Activated T-helper 2 cell treated with anti-CD3 and anti-CD28 coated beads, Interferon-gamma antibody, Interleukin-2, Interleukin-4, amounts not matched to agents 10 μg/mL and 5 μg/mL and 100 μg/mL, durations not matched to agents 14 hours and 24 hours and 36 hours (primary cell): ENCODE measurements at regions of chr6 and their contacts with region 1.

Region 1: GRCh38 chr6:90445533-90446108 is 141.3 kb downstream of the MAP3K7 start:
- DNase-seq: no peak
- H3K4me3 Mint-ChIP-seq: no peak overlapping the region
- H3K27ac Mint-ChIP-seq: peak overlapping the region; percentile 97
- H3K4me1 Mint-ChIP-seq: peaks cover 56% of the 10 kb centered on the region
- H3K27me3 Mint-ChIP-seq: no peaks in the 10 kb centered on the region

Region 2: GRCh38 chr6:90401933-90402830 is 43.4 kb before region 1 on chr6:
- intact Hi-C with region 1: loop called (anchors 1 kb)
- DNase-seq: peak; percentile 41
- H3K4me3 Mint-ChIP-seq: peak overlapping the region; percentile 15
- H3K27ac Mint-ChIP-seq: peak overlapping the region; percentile 88
- H3K4me1 Mint-ChIP-seq: peaks cover 85% of the 10 kb centered on the region
- H3K27me3 Mint-ChIP-seq: no peaks in the 10 kb centered on the region

Region 3: GRCh38 chr6:90411292-90411781 is 34.3 kb before region 1 on chr6:
- intact Hi-C with region 1: loop called (anchors 1 kb)
- DNase-seq: peak; percentile 62
- H3K4me3 Mint-ChIP-seq: no peak overlapping the region
- H3K27ac Mint-ChIP-seq: peak overlapping the region; percentile 81
- H3K4me1 Mint-ChIP-seq: peaks cover 81% of the 10 kb centered on the region
- H3K27me3 Mint-ChIP-seq: no peaks in the 10 kb centered on the region

Region 4: DNA sequence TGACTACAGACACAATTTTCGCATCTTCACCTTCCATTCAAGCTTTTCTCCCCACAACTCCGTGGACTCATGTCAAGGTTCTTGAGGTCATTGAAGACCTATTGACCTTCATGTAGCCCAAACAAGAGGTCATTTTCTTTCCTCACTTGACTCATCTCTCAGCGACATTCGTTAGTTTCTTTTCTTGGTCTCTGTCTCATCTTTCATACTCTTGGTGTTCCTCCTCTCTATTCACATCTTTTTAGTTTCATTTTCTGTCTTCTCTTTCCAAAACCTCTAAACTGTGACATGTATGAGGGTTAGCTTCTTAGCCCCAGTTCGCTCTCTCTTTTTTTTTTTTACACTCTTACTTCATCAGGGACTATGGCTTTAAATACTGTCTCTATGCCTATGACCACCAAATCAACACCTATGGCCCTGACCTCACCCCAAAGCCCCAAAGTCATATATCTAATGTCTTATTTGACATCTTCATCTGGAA is 20.4 kb before region 1 on chr6:
- intact Hi-C with region 1: loop called (anchors 1 kb)
- DNase-seq: no peak
- H3K4me3 Mint-ChIP-seq: peak overlapping the region; percentile 52
- H3K27ac Mint-ChIP-seq: peak overlapping the region; percentile 95
- H3K4me1 Mint-ChIP-seq: peaks cover 28% of the 10 kb centered on the region
- H3K27me3 Mint-ChIP-seq: no peaks in the 10 kb centered on the region

Region 5: DNA sequence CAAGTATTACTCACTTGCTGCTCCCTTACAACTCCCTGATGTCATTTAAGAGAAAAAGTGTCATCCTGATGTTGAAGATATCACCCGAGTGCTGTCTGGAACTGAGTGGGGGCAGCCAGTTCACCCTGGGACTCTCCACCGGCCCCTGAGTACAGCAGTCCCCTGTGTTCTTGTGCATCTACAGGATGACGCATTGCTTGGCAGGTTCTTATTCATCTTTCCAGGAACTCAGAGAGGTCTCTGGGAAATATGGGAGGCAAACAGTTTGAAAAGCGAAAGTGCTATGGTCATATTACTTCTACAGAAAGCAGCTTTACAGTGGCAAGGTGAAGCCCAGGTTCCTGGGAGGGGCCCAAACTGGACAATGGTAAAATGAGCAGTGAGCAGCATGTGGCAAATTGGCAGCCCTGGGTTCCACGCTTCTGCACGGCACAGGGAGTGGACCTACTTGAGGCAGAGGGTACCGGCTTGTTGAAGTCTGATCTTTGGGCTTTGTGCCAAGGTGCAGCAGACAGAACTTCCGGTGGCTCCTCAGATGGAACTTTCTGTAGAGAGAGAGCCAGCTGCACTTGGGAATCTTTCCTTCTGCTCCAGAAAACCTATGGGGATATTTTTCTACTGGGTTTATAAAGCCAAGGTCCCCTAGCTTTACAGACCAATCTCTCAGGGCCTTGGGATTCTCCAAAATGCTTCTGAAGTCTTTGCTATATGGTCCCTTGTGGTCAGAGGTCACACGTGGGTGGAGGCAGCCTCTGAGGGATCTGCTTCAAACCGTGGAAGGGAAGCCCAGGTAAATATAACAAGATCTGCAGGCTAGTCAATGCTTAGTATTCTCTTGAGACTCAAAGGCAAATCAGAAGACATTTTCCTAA is 13.0 kb after region 1 on chr6:
- intact Hi-C with region 1: loop called (anchors 1 kb)
- DNase-seq: peak; percentile 68
- H3K4me3 Mint-ChIP-seq: peak overlapping the region; percentile 27
- H3K27ac Mint-ChIP-seq: peak overlapping the region; percentile 95
- H3K4me1 Mint-ChIP-seq: peaks cover 76% of the 10 kb centered on the region
- H3K27me3 Mint-ChIP-seq: no peaks in the 10 kb centered on the region

Region 6: GRCh38 chr6:90466154-90466940 is 20.7 kb after region 1 on chr6:
- intact Hi-C with region 1: loop called (anchors 1 kb)
- DNase-seq: no peak
- H3K4me3 Mint-ChIP-seq: peak overlapping the region; percentile 37
- H3K27ac Mint-ChIP-seq: peak overlapping the region; percentile 94
- H3K4me1 Mint-ChIP-seq: peaks cover 93% of the 10 kb centered on the region
- H3K27me3 Mint-ChIP-seq: no peaks in the 10 kb centered on the region

Region 7: DNA sequence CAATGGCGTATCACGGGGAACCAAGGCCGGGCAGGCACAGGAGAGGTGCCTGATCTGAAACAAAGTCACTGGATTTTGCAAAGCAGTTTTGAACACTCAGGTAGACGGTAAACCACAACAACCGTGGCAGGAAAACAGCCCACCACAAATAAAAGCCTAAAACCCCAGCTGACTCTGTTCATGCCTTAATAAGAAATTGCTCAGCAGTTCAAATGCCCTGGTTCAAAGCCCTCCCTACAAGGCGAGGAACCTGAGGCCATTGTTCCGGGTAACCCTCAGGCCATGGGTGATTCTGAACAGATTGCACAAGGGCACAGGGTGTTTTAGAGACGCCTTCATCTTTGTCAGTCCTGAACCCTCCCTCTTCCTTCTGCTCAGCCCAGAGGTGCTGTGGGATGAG is 27.1 kb after region 1 on chr6:
- intact Hi-C with region 1: loop called (anchors 1 kb)
- DNase-seq: peak; percentile 57
- H3K4me3 Mint-ChIP-seq: peak overlapping the region; percentile 72
- H3K27ac Mint-ChIP-seq: peak overlapping the region; percentile 93
- H3K4me1 Mint-ChIP-seq: peaks cover 94% of the 10 kb centered on the region
- H3K27me3 Mint-ChIP-seq: no peaks in the 10 kb centered on the region